Natural killer cell (primary cell): ENCODE measurements at regions of chr20 and their contacts with region 1.

Region 1: GRCh38 chr20:1212607-1213396 is 9.5 kb downstream of the C20orf202 start:
- DNase-seq: peak; percentile 38 to 85
- ATAC-seq: peak; percentile 90 to 99 (median 94)
- H3K4me3 ChIP-seq: no peak overlapping the region
- H3K4me3 Mint-ChIP-seq: no peak overlapping the region
- H3K27ac ChIP-seq: no peak overlapping the region
- H3K27ac Mint-ChIP-seq: no peak overlapping the region
- H3K4me1 ChIP-seq: peaks cover 4% of the 10 kb centered on the region
- H3K4me1 Mint-ChIP-seq: peaks cover 5 to 8% of the 10 kb centered on the region in 2 donors
- H3K27me3 ChIP-seq: no peaks in the 10 kb centered on the region
- H3K27me3 Mint-ChIP-seq: peaks cover 22 to 36% of the 10 kb centered on the region in 2 donors
- CTCF ChIP-seq: peak; percentile 82

Region 2: DNA sequence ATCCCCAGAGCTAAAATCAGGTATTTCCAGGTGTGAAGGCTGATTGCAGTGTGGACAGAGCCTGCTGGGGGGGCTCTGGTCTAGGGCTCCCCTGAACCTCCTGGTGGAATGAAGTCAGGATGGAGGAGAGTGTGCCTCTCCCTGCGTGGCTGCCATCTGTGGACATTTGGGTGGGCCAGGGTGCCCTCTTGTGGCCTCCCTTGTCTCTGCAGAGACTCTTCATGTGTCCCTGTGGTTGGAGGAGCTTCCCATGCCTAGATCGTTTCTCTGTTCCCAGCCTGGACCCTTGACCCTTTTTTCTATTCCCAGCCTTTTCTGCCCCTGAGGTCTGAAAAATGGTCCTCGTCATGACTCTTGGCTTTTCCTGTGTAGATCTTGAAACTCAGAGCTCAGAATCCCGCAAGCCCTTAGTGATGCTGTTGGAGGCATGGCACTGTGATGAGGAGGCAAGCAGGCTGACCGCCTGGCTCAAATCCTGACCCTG is 104.3 kb before region 1 on chr20:
- intact Hi-C with region 1: loop called (anchors 10 kb)
- DNase-seq: peak; percentile 44 to 70
- ATAC-seq: peak; percentile 65 to 90 (median 82)
- H3K4me3 ChIP-seq: no peak overlapping the region
- H3K4me3 Mint-ChIP-seq: no peak overlapping the region
- H3K27ac ChIP-seq: no peak overlapping the region
- H3K27ac Mint-ChIP-seq: no peak overlapping the region
- H3K4me1 ChIP-seq: peaks cover 4% of the 10 kb centered on the region
- H3K4me1 Mint-ChIP-seq: no peaks in the 10 kb centered on the region
- H3K27me3 ChIP-seq: no peaks in the 10 kb centered on the region
- H3K27me3 Mint-ChIP-seq: peaks cover 0 to 4% of the 10 kb centered on the region in 2 donors
- CTCF ChIP-seq: peak; percentile 73